Naive thymus-derived CD4-positive, alpha-beta T cell (primary cell): ENCODE measurements at regions of chr1 and their contacts with region 1.

Region 1: DNA sequence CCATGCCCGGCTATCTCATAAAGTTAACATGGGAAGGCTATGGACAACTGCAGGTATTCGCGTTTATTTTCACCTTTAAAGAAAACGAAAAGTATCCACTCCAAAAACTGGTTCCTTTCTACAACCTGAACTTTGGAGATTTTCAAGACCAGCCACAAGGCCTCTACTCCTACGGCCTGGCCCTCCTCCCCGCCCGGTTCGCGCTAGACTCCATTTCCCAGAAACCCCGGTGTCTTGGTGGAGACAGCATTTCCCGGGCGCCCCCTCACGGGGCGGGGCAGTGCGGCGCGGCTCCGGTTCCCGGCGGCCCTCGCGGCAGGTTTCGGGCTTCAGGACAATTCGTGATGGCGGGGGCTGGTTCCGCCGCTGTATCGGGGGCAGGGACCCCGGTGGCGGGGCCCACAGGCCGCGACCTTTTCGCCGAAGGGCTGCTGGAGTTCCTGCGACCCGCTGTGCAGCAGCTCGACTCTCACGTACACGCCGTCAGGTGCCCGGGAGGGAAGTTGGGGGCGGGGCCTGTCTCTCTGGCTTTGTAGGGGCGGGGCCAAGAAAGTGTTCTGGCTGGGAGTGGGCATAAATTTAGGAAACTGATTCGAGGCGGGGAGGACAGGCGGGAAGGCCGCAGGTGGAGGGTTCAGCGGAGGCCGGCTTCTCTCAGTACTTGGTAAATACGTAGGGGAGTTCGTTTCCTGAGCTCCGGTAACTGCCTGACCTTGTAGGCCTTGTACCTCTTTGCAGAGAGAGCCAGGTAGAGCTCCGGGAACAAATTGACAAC is at the start of gene SNAPIN:
- DNase-seq: peak; percentile 81 to 94 (median 88)
- ATAC-seq: peak; percentile 98
- H3K4me3 ChIP-seq: peak within 1 kb of the TSS; percentile 93
- H3K4me3 Mint-ChIP-seq: peak within 1 kb of the TSS; percentile 91 to 97 (median 94)
- H3K27ac ChIP-seq: peak within 1 kb of the TSS; percentile 90
- H3K27ac Mint-ChIP-seq: peak within 1 kb of the TSS; percentile 90 to 98 (median 91)
- H3K4me1 ChIP-seq: peaks cover 9 to 13% of the 10 kb centered on the region in 2 donors
- H3K4me1 Mint-ChIP-seq: peaks cover 8 to 26% (median 14%) of the 10 kb centered on the region in 7 donors
- H3K27me3 ChIP-seq: no peaks in the 10 kb centered on the region
- H3K27me3 Mint-ChIP-seq: no peaks in the 10 kb centered on the region
- total RNA-seq, gene SNAPIN: 10.2 to 43.5 (median 29.8) TPM

Region 2: DNA sequence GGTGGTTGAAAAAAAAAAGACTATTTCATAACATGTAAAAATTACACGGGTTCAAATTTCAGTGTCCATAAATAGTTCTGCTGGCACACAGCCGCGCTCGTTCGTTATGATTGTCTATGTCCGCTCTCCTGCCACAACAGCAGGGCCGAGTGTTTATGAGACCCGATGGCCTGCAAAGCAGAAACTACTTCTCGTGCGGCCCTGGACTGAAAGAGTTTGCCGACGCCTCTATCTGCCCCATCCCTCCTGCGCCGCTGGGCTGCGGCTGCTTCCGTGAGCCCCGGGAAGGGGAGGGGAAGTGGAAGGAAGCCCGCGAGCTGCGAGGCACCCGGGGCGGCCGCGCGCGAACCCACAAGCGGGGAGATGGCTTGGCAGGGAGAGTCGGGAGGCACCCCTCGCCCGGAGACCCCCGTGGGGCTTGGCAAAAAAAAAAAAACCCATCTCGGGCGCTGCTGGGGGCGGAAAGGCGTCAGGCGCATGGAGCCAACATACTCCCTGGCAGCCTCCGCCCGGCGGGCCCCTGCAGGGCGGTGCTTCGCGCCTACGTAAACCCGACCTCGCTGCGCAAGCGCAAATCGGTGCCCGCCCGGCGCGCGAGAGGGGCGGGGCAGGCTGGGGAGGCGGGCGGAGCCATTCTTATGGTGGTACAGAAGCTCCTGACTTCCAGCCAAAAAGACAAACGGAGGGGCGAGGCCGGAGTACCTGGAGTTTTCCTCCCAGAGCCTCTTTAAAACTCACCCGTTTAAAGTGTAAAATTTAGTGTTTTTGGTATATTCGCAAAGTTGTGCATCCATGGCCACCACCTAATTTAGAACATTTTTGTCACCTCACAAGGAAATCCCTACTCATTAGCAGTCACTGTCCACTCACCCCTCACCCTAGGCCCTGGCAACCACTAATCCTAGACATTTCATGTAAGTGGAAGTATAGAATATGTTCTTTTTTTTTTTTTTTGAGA is 124.9 kb after region 1 on chr1:
- CTCF ChIA-PET with region 1: no interaction called
- POLR2A ChIA-PET with region 1: interaction called, 5 read pairs
- intact Hi-C with region 1: loop called in 1 of 2 experiments (anchors 1 kb)
- DNase-seq: peak; percentile 86 to 95 (median 92)
- ATAC-seq: peak; percentile 99
- H3K4me3 ChIP-seq: peak overlapping the region; percentile 78
- H3K4me3 Mint-ChIP-seq: peak overlapping the region; percentile 80 to 97 (median 90)
- H3K27ac ChIP-seq: peak overlapping the region; percentile 96
- H3K27ac Mint-ChIP-seq: peak overlapping the region; percentile 92 to 99 (median 95)
- H3K4me1 ChIP-seq: peaks cover 0 to 10% of the 10 kb centered on the region in 2 donors
- H3K4me1 Mint-ChIP-seq: peaks cover 0 to 17% (median 9%) of the 10 kb centered on the region in 7 donors
- H3K27me3 ChIP-seq: no peaks in the 10 kb centered on the region
- H3K27me3 Mint-ChIP-seq: peaks cover 0 to 6% (median 4%) of the 10 kb centered on the region in 5 donors

Region 3: GRCh38 chr1:153852170-153852569 is 193.6 kb after region 1 on chr1:
- CTCF ChIA-PET with region 1: no interaction called
- POLR2A ChIA-PET with region 1: no interaction called
- intact Hi-C with region 1: no loop called
- DNase-seq: no peak
- ATAC-seq: no peak
- H3K4me3 ChIP-seq: no peak overlapping the region
- H3K4me3 Mint-ChIP-seq: no peak overlapping the region
- H3K27ac ChIP-seq: no peak overlapping the region
- H3K27ac Mint-ChIP-seq: peak overlapping the region in 5 of 9 donors; percentile 7 to 71 (median 43)
- H3K4me1 ChIP-seq: peaks cover 0 to 7% of the 10 kb centered on the region in 2 donors
- H3K4me1 Mint-ChIP-seq: peaks cover 9 to 65% (median 61%) of the 10 kb centered on the region in 7 donors
- H3K27me3 ChIP-seq: no peaks in the 10 kb centered on the region
- H3K27me3 Mint-ChIP-seq: no peaks in the 10 kb centered on the region